T-cell (primary cell): ENCODE measurements at regions of chr19 and their contacts with region 1.

Region 1: DNA sequence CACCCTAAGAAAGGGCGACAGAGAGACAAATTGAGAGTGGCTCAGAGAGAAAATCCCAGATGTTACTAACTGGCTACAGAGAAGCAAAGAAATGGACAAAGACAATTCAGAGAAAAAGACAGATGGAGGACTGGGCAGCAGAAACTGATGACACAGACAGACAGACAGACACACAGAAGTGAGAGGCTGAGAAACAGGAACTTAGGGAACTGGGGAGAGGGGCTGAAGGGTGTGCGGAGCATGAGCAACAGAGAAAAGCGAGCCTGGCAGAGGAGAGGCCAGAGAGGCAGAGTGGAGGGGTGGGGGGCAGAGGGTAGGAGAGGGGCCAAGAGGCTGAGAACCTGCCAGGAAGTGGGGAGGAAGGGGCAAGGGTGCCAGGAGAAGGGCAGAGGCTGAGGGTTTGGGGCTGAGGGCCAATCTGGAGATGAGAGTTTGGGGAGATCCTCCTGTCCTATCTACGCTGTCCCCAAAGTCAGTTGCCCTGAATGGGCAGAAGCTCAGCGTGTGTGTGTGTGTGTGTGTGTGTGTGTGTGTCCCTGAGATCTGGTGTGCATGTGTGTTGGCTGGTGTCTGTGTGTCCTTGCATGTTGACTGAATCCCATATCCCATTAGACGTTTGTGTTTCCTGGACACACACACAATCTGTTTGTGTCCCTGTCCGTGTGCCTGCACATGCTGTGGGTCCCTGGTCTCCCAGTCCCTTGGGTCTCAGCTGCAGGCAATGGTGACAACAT is 5.6 kb upstream of the ERFL start:
- DNase-seq: no peak
- ATAC-seq: no peak
- H3K4me3 ChIP-seq: no peak overlapping the region
- H3K4me3 Mint-ChIP-seq: peak overlapping the region in 1 of 3 donors; percentile 41
- H3K27ac ChIP-seq: peak overlapping the region; percentile 23
- H3K27ac Mint-ChIP-seq: peak overlapping the region; percentile 84 to 86
- H3K4me1 ChIP-seq: peaks cover 24 to 63% of the 10 kb centered on the region in 2 experiments
- H3K4me1 Mint-ChIP-seq: peaks cover 60 to 72% (median 67%) of the 10 kb centered on the region in 3 donors
- H3K27me3 ChIP-seq: peaks cover 0 to 18% of the 10 kb centered on the region in 2 experiments
- H3K27me3 Mint-ChIP-seq: peaks cover 4 to 7% of the 10 kb centered on the region in 2 donors

Region 2: GRCh38 chr19:41906916-41907680 is 26.8 kb before region 1 on chr19:
- CTCF ChIA-PET with region 1: interaction called in 1 of 2 experiments, 10 read pairs
- POLR2A ChIA-PET with region 1: interaction called in 1 of 2 experiments, 5 read pairs
- DNase-seq: no peak
- ATAC-seq: no peak
- H3K4me3 ChIP-seq: no peak overlapping the region
- H3K4me3 Mint-ChIP-seq: no peak overlapping the region
- H3K27ac ChIP-seq: no peak overlapping the region
- H3K27ac Mint-ChIP-seq: peak overlapping the region; percentile 4 to 71
- H3K4me1 ChIP-seq: peaks cover 3 to 57% of the 10 kb centered on the region in 2 experiments
- H3K4me1 Mint-ChIP-seq: peaks cover 52 to 57% (median 55%) of the 10 kb centered on the region in 3 donors
- H3K27me3 ChIP-seq: peaks cover 0 to 4% of the 10 kb centered on the region in 2 experiments
- H3K27me3 Mint-ChIP-seq: peaks cover 0 to 4% of the 10 kb centered on the region in 2 donors

Region 3: DNA sequence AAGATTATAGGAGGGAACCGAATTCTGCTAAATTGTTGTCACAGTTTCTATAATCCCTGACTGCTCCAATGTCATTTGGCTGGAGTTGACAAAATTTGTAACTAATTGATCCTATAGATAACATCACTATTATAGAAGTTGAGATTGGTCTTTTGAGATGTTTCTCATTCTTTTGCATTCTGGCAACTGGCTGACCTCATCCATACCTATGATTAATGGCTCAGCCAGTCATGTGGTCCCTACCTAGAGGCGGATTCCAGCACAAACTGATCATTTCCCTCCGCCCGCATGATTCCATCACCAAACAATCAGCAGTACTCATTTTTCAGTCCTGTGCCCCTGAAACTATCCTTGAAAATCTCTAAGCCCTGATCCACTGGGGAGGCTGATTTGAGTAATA is 1144.5 kb after region 1 on chr19:
- CTCF ChIA-PET with region 1: no interaction called
- POLR2A ChIA-PET with region 1: no interaction called
- DNase-seq: no peak
- ATAC-seq: no peak
- H3K4me3 ChIP-seq: no peak overlapping the region
- H3K4me3 Mint-ChIP-seq: no peak overlapping the region
- H3K27ac ChIP-seq: no peak overlapping the region
- H3K27ac Mint-ChIP-seq: no peak overlapping the region
- H3K4me1 ChIP-seq: no peaks in the 10 kb centered on the region
- H3K4me1 Mint-ChIP-seq: no peaks in the 10 kb centered on the region
- H3K27me3 ChIP-seq: peaks cover 0 to 2% of the 10 kb centered on the region in 2 experiments
- H3K27me3 Mint-ChIP-seq: peaks cover 6 to 8% of the 10 kb centered on the region in 2 donors